Activated CD4-positive, alpha-beta T cell treated with anti-CD3 and anti-CD28 coated beads, Interleukin-2, amount 10 ng/mL, durations not matched to agents 24 days and 14 days (primary cell): ENCODE measurements at regions of chr4 and their contacts with region 1.

Region 1: GRCh38 chr4:83110223-83110945 is 4.1 kb downstream of the PLAC8 start:
- DNase-seq: peak; percentile 97
- H3K4me3 Mint-ChIP-seq: peak overlapping the region; percentile 89
- H3K27ac Mint-ChIP-seq: peak overlapping the region; percentile 95
- H3K4me1 Mint-ChIP-seq: peaks cover 53% of the 10 kb centered on the region
- H3K27me3 Mint-ChIP-seq: no peaks in the 10 kb centered on the region

Region 2: DNA sequence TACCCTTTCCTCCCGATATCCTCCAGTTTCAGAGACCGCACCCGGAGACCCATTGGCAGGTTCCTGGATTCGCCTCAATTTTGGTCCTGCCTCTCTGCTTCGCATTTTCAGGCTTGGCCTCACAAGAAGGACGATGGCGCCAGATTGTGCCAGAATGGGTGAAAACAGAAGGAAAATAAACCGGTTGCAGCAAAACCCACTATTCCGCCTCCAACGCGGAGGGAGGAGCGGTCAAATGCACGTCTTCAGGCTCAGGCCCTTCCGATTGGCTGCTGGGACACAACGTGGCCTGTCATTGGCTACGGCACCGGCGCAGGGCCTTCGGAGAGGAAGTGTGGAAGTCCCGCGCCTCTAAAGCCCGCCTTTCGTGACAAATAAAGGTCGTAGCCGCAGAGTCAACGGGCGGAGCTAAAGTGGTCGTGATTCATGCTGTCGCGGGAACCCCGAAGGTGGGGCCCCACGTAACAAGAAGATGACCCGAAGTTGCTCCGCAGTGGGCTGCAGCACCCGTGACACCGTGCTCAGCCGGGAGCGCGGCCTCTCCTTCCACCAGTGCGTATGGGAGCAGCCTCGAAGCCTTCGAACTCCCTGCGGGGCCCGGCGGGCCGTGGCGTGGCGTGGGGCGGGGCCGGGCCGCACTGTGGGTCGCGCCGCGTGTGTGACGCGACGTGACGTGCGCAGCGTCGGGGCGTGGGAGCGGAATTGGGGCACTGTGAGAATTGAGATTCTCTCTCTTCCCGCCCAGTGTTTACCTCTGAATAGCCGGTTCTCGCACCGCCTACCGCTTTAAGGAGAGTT is 209.9 kb before region 1 on chr4 and contains the start of gene THAP9:
- intact Hi-C with region 1: loop called (anchors 2 kb)
- DNase-seq: peak; percentile 99
- H3K4me3 Mint-ChIP-seq: no peak within 1 kb of the TSS
- H3K27ac Mint-ChIP-seq: no peak within 1 kb of the TSS
- H3K4me1 Mint-ChIP-seq: peaks cover 29% of the 10 kb centered on the region
- H3K27me3 Mint-ChIP-seq: peaks cover 2% of the 10 kb centered on the region
- total RNA-seq, gene THAP9: 1.7 and 3.7 TPM in 2 replicates

Region 3: DNA sequence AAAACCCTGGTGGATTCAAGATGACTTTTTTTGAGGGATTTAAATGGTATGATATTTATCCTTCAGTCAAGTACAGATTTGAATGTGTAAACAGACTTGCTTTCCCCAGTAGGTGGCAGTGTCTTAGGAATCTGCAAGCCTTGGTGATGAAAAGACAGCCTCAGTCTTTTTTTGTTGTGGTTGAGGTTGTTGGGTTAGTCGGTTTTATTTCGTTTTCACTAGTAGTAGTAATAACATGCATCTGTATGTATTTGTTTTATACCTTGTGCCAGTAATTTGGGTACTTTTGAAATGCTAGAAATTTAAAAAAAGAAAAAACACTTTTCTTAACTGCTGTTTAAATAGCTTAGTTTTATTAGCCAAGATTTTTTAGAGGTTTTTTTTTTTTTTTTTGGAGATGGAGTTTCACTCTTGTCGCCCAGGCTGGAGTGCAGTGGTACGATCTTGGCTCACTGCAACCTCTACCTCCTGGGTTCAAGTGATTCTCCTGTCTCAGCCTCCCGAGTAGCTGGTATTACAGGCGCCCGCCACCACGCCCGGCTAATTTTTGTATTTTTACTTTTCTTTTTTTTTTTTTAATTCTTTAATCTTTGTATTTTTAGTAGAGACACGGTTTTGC is 36.2 kb before region 1 on chr4:
- intact Hi-C with region 1: loop called (anchors 1 kb)
- DNase-seq: peak; percentile 93
- H3K4me3 Mint-ChIP-seq: peak overlapping the region; percentile 2
- H3K27ac Mint-ChIP-seq: peak overlapping the region; percentile 43
- H3K4me1 Mint-ChIP-seq: peaks cover 11% of the 10 kb centered on the region
- H3K27me3 Mint-ChIP-seq: no peaks in the 10 kb centered on the region

Region 4: DNA sequence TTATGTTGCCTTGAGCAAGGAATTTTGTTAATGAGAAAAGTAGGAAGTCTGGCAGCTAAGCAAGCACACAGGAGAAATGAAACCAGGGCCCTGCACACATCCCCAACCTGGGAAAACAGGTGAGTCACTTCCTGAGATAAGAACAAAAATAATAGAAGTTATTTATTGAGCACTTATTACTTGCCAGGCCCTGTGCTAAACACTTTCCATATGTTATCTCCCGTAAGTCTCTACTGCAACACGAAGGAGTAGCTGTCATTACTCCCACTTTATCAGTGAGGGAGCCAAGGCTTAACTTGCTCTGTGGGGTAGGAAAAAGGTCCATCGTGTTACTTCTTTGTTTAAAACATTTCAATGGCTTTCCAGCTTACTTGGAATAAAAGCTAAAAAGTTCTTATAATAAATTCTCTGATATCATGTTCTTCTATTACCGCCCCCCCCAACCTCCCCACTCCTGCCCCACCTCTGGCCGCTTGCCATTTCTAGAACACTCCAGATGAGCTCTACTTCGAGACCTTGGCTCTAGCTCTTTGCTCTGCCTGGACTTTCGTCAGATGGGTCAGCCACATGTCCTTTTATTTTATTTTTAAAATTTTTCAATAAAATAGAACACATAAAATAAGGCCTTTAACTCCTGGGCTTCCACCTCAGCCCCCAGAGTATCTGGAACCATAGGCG is 40.4 kb after region 1 on chr4:
- intact Hi-C with region 1: no loop called
- DNase-seq: no peak
- H3K4me3 Mint-ChIP-seq: no peak overlapping the region
- H3K27ac Mint-ChIP-seq: no peak overlapping the region
- H3K4me1 Mint-ChIP-seq: peaks cover 14% of the 10 kb centered on the region
- H3K27me3 Mint-ChIP-seq: peaks cover 9% of the 10 kb centered on the region

Region 5: DNA sequence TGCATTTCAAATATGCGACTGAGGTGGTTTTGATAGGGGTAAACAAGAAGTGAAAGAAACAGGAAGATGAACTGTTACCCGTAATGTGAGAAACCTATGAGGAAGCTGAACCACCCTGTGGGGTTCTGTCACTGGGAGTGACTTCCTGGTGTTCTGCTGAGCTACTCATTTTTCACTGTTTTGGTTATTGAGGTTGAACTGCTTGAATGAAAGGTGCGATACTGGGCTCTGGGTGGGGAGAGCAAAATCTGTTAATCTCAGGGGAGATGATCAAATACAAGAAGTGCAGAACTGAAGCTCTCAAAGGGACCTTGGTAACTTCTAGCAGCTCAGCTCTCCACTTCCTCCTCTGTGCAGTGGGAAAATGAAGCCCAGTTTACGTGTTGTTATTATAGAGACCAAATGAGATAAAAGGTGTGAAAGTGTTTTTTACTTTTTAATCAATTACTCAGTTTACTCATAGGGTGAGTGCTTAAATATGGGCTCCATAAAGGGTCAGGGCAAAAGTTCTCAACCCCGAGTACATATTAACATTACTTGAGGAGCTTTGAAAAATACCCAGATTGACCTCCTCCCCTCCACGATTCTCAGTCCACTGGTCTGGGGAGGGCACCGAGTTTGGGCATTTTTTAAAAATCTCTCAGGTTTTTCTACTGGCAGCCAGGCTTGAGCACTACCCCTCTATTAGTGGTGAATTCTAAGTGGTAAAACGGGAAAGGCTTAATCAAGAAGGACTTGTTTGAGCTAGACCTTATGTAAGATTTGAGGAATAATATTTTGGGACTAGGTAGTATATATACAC is 107.5 kb after region 1 on chr4:
- intact Hi-C with region 1: loop called (anchors 1 kb)
- DNase-seq: peak; percentile 92
- H3K4me3 Mint-ChIP-seq: peak overlapping the region; percentile 69
- H3K27ac Mint-ChIP-seq: peak overlapping the region; percentile 83
- H3K4me1 Mint-ChIP-seq: peaks cover 66% of the 10 kb centered on the region
- H3K27me3 Mint-ChIP-seq: no peaks in the 10 kb centered on the region

Region 6: GRCh38 chr4:83284193-83285054 is 174.0 kb after region 1 on chr4 and contains the start of gene COQ2:
- intact Hi-C with region 1: loop called (anchors 1 kb)
- DNase-seq: peak; percentile 98
- H3K4me3 Mint-ChIP-seq: peak within 1 kb of the TSS; percentile 93
- H3K27ac Mint-ChIP-seq: peak within 1 kb of the TSS; percentile 96
- H3K4me1 Mint-ChIP-seq: peaks cover 31% of the 10 kb centered on the region
- H3K27me3 Mint-ChIP-seq: no peaks in the 10 kb centered on the region
- total RNA-seq, gene COQ2: 20.5 and 20.7 TPM in 2 replicates

Region 7: GRCh38 chr4:83455281-83456129 is 345.1 kb after region 1 on chr4 and contains the starts of genes HELQ and MRPS18C:
- intact Hi-C with region 1: loop called (anchors 5 kb)
- DNase-seq: peak; percentile 98
- H3K4me3 Mint-ChIP-seq: peak within 1 kb of the TSS; percentile 99
- H3K27ac Mint-ChIP-seq: peak within 1 kb of the TSS; percentile 100
- H3K4me1 Mint-ChIP-seq: peaks cover 26% of the 10 kb centered on the region
- H3K27me3 Mint-ChIP-seq: no peaks in the 10 kb centered on the region
- total RNA-seq, gene HELQ: 9.1 and 11.4 TPM in 2 replicates
- total RNA-seq, gene MRPS18C: 83.9 and 86.6 TPM in 2 replicates